H1 (cell line): ENCODE measurements at regions of chr16 and their contacts with region 1.

Region 1: DNA sequence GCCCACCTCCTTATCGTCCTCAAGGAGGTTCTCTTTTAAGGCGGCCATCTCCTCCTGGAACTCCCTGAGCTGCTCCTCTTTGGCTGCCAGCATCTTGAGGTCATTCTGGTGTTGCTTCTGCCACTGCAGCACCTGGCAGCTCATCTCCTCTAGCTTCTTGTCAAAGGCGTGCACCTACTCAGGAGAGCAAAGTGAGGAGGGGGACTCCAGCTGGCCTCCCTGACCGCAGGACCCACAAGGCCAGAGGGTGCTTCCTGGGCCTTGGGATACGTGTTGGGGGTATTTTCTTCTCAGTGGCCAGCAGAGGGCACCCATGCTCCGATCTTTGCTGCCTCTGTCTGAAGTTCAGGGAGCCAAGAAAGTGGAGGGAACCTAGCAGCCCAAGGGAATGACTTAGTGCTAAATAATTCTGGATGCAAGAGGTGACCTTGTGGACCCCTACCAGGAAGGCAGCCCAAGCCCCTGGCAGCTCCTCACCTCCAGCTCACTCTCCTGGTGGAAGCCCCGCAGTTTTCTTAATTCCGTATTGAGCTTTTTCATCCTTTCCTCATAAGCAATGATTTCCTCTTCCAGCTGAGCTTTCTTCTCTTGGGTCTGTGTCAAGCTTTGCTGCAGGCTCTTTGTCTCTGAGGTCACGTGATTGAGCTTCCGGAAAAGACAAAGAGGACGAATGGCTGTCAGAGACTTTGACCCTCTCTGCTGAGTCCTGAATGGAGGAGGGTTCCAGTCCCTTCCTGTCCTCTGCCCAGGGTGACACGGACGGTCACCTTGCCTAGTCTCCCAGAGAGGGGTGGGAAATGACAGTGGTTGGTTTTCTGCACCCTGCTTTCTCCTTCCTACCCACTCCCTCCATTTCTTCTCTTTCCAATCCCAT is 31.4 kb downstream of the DHX38 start:
- DNase-seq: peak; percentile 53 to 84
- H3K4me3 ChIP-seq: no peak overlapping the region
- H3K27ac ChIP-seq: no peak overlapping the region
- H3K4me1 ChIP-seq: peaks cover 0 to 4% (median 0%) of the 10 kb centered on the region in 4 experiments; a peak in 3 of 7 replicates
- H3K27me3 ChIP-seq: no peaks in the 10 kb centered on the region
- CTCF ChIP-seq: peak; percentile 79 to 91 (median 82)
- EP300 ChIP-seq: no peak
- POLR2A ChIP-seq: no peak
- RAD21 ChIP-seq: peak; percentile 92

Region 2: GRCh38 chr16:72137380-72138063 is 12.5 kb after region 1 on chr16:
- CTCF ChIA-PET with region 1: interaction called, 23 read pairs
- POLR2A ChIA-PET with region 1: no interaction called
- DNase-seq: no peak
- H3K4me3 ChIP-seq: no peak overlapping the region
- H3K27ac ChIP-seq: no peak overlapping the region
- H3K4me1 ChIP-seq: 0 out of 7 replicates have a peak, but pooled peaks cover 0 to 2% (median 0%) of the 10 kb centered on the region in 4 experiments
- H3K27me3 ChIP-seq: no peaks in the 10 kb centered on the region
- CTCF ChIP-seq: no peak
- EP300 ChIP-seq: no peak
- POLR2A ChIP-seq: no peak
- RAD21 ChIP-seq: no peak

Region 3: DNA sequence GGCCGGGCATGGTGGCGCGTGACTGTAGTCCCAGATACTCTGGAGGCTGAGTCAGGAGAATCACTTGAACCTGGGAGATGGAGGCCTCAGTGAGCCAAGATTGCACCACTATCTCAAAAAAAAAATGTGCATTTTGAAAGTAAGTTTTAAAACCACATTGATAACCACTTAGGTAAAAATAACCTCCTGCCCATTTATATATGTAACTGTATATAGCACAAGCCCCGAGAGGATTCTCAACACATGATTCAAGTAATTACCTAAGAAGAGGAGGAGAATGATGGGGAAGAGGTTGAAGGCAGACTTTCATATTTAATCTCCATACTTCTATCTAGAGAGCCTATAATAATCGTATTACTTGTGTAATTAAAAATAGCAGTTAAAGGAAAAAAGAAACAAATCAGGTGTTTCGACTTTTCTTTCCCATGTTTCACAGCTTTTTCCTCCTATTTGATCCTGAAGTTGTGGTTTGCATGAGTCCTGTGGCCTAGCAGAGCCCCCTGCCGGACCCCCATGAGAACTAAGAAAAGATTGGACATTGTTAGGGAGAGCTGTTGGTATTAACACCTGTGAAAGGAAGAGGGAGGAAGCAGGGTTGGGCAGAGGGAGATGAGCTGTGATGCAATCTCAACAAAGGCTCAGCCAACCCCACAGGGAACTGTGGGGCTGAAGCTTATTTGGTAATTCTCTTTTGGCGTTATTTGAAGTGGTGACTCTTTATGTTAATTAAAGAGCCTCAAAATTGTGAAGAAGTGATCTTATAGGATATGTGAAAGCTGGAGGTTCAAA is 24.9 kb after region 1 on chr16:
- CTCF ChIA-PET with region 1: interaction called, 43 read pairs
- POLR2A ChIA-PET with region 1: interaction called, 8 read pairs
- DNase-seq: no peak
- H3K4me3 ChIP-seq: no peak overlapping the region
- H3K27ac ChIP-seq: no peak overlapping the region
- H3K4me1 ChIP-seq: no peaks in the 10 kb centered on the region
- H3K27me3 ChIP-seq: no peaks in the 10 kb centered on the region
- CTCF ChIP-seq: peak; percentile 16 to 52 (median 42)
- EP300 ChIP-seq: no peak
- POLR2A ChIP-seq: no peak
- RAD21 ChIP-seq: peak; percentile 47 to 68

Region 4: DNA sequence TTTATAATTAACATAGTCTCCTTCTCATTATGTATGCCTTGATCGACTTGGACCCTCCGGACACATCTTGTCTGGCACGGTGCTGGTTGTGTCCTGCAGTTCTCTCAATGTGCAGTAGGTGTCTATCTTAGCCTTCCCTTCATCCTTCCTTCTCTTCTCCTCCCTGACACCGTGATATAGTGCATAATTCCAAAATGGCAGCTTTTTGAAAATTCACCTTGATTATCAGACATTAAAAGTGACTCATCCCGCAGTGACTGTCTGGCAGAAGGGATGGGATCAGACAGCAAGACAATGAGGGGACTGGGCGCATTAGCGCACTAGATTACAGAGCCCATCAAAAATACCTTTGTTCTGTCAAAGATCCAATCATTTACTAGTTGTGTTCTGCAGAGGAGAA is 116.9 kb after region 1 on chr16:
- CTCF ChIA-PET with region 1: interaction called, 14 read pairs
- POLR2A ChIA-PET with region 1: no interaction called
- DNase-seq: no peak
- H3K4me3 ChIP-seq: no peak overlapping the region
- H3K27ac ChIP-seq: no peak overlapping the region
- H3K4me1 ChIP-seq: no peaks in the 10 kb centered on the region
- H3K27me3 ChIP-seq: no peaks in the 10 kb centered on the region
- CTCF ChIP-seq: peak; percentile 69 to 84 (median 71)
- EP300 ChIP-seq: no peak
- POLR2A ChIP-seq: no peak
- RAD21 ChIP-seq: peak; percentile 90 to 91